ENCODE measurements at regions of chr19 and their contacts with region 1.

Region 1: DNA sequence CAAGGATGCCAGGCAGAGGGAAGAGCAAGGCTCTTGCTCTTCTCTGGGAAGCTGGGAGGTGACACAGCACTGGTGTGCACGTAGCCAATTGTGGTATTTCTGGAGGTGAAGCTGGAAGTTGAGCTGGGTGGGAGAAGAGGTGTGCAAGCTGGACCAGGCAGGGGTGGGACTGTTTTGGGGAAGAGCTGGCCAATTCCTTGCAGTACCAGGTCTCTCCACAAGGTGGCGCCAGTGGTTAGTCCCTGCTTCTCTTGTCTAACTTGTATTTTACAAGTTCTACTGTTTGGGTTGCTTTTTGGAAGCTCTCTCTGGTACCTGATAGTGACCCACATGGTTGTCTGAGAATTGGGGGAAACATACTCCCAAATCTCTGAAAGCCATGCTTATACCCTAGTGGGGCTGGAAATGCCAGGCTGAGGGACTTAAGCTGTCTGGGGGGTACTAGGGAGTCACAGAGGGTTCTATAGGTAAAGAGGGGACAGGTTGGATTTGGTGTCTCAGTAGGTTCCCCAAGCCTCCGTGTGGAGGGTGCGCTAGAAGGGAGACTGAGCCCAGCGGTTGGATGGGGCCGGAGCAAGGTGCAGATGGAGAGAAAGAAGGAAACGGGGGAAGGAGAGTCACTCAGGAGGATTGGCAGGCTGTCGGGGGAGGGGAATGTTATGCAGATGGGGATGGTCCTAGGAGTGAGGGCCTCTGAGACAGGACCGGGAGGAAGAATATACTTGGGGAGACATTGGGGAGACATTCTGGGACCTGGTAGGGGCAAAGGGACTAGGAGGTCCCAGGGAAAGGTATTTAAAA is 3.0 kb downstream of the HPN start:
- DNase-seq: peak; percentile 85
- H3K4me3 ChIP-seq: peak overlapping the region in 1 of 2 experiments; percentile 26; a peak in 1 of 4 replicates
- H3K27ac ChIP-seq: no peak overlapping the region
- H3K4me1 ChIP-seq: peaks cover 0 to 8% of the 10 kb centered on the region in 2 experiments; a peak in 1 of 4 replicates
- H3K27me3 ChIP-seq: no peaks in the 10 kb centered on the region
- CTCF ChIP-seq: peak; percentile 98
- EP300 ChIP-seq: no peak
- RAD21 ChIP-seq: peak; percentile 62

Region 2: DNA sequence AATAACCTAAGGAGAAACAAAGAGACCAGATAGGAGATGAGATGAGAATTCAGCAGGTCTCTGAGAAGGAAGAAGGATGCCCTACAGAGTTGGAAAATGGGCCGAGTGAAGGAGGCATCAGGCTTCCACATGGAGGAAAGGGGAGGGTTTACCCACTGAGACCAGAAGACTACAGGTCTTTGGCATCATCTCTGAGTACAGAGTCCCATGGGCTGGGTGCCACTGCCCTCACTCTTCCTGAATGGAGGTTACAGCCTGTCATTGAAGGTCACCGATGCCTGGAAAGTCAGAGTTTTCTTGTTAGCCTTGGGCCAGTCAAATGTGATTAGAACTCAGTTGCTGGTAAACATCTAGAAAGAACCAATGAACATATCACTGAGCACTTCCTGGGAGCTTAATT is 357.2 kb before region 1 on chr19:
- CTCF ChIA-PET with region 1: no interaction called
- POLR2A ChIA-PET with region 1: no interaction called
- DNase-seq: no peak
- H3K4me3 ChIP-seq: no peak overlapping the region
- H3K27ac ChIP-seq: no peak overlapping the region
- H3K4me1 ChIP-seq: no peaks in the 10 kb centered on the region
- H3K27me3 ChIP-seq: no peaks in the 10 kb centered on the region
- CTCF ChIP-seq: no peak
- EP300 ChIP-seq: no peak
- RAD21 ChIP-seq: no peak

Region 3: DNA sequence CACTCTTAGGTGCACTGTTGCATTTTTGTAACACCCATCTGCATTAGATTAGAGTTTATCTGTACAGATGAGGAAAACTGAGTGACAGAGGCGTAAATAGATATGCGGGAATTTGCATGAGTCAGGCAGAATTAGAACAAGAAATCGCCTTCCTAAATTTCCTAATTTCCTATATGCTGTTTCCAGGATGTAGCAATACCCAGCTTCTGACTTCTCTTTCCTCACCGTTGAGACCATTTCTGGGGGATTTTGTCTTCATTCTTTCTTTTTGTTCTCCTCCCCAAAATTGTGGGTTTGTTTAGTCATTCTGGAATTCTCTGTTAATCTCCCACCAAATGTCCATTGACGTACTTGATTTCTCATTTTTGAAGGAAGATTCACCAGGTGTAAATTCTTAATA is 69.9 kb before region 1 on chr19:
- CTCF ChIA-PET with region 1: interaction called, 14 read pairs
- POLR2A ChIA-PET with region 1: no interaction called
- DNase-seq: no peak
- H3K4me3 ChIP-seq: no peak overlapping the region
- H3K27ac ChIP-seq: no peak overlapping the region
- H3K4me1 ChIP-seq: no peaks in the 10 kb centered on the region
- H3K27me3 ChIP-seq: peaks cover 6% of the 10 kb centered on the region; the same call in 1 of the 2 replicates
- CTCF ChIP-seq: no peak
- EP300 ChIP-seq: no peak
- RAD21 ChIP-seq: no peak

Region 4: GRCh38 chr19:35022460-35022859 is 22.1 kb before region 1 on chr19:
- CTCF ChIA-PET with region 1: interaction called, 13 read pairs
- POLR2A ChIA-PET with region 1: no interaction called
- DNase-seq: no peak
- H3K4me3 ChIP-seq: no peak overlapping the region
- H3K27ac ChIP-seq: no peak overlapping the region
- H3K4me1 ChIP-seq: peaks cover 0 to 6% of the 10 kb centered on the region in 2 experiments; a peak in 1 of 4 replicates
- H3K27me3 ChIP-seq: no peaks in the 10 kb centered on the region
- CTCF ChIP-seq: no peak
- EP300 ChIP-seq: no peak
- RAD21 ChIP-seq: no peak

Region 5: GRCh38 chr19:35055715-35056179 is 11.2 kb after region 1 on chr19:
- CTCF ChIA-PET with region 1: interaction called, 86 read pairs
- POLR2A ChIA-PET with region 1: no interaction called
- DNase-seq: no peak
- H3K4me3 ChIP-seq: no peak overlapping the region
- H3K27ac ChIP-seq: no peak overlapping the region
- H3K4me1 ChIP-seq: no peaks in the 10 kb centered on the region
- H3K27me3 ChIP-seq: peaks cover 37% of the 10 kb centered on the region
- CTCF ChIP-seq: peak; percentile 24; the same call in 1 of the 2 replicates
- EP300 ChIP-seq: no peak
- RAD21 ChIP-seq: no peak

Region 6: DNA sequence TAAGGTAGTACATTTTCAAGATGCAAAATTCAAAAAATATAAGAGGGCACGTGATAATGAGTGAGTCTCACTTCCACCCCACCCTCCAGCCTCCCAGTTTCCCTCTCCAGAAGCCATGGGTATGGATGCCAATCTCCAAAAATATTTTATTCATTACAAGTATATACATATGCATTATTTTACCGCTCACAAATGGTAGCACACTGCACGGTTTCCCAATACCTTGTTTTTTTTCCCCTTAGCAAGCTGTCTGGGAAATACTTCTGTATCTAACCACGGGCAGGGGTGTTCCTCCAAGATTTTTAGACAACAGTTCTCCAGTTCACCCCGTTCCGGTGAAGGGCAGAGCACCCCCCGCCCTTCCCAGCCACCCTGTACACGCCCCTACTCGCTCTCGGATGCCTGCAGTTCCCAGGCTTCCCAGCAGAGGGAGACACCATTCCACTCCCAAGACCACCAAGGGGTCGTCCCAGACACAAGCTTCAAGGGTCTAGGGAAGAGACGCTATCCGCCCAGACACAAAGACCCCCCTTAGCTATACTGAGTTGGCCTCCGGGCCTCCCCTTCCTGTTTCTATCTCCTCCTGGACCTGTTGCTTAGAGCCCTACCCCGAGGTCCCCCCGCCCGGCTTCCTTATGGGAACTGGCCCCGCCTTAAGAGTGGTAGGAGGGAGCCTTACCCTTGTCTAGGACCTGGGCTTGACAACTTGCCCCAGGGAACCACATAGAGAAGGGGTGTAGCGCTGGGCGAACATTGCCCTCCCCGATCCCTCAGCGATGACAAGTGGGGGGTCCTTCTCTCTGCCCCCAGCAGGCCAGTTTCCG is 70.0 kb after region 1 on chr19:
- CTCF ChIA-PET with region 1: interaction called, 10 read pairs
- POLR2A ChIA-PET with region 1: no interaction called
- DNase-seq: peak; percentile 92
- H3K4me3 ChIP-seq: peak overlapping the region in 1 of 2 experiments; percentile 44; a peak in 1 of 4 replicates
- H3K27ac ChIP-seq: no peak overlapping the region
- H3K4me1 ChIP-seq: peaks cover 0 to 8% of the 10 kb centered on the region in 2 experiments; a peak in 1 of 4 replicates
- H3K27me3 ChIP-seq: no peaks in the 10 kb centered on the region; the same call in 1 of the 2 replicates
- CTCF ChIP-seq: peak; percentile 96
- EP300 ChIP-seq: no peak
- RAD21 ChIP-seq: peak; percentile 70

Region 7: DNA sequence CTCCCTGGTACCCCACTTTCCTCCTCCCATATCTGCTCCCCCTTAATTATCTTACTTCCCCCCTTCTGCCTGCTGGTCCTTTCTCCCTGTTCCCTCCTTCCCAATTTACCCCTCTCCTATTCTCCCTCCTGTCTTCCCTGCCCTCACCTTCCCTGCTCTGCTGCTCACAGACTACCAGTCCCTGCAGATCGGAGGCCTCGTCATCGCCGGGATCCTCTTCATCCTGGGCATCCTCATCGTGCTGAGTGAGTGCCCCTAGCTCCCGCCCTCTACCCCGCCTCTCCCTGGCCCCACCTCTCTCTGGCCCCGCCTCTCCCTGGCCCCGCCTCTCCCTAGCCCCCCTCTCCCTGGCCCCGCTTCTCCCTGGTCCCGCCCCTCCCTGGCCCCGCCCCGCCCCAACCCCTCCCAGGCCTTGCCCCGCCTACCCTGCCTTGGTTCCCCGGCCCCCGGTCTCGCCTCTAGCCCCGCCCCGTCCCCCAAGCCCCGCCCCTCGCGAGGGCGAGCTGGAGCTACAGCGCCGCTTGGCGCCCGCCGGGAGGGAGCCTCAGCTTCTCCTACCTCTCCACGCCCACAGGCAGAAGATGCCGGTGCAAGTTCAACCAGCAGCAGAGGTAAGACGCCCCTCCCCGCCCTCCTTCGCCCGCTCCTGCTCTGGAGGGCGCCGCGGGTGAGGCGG is 96.6 kb after region 1 on chr19:
- CTCF ChIA-PET with region 1: interaction called, 23 read pairs
- POLR2A ChIA-PET with region 1: no interaction called
- DNase-seq: peak; percentile 100
- H3K4me3 ChIP-seq: peak overlapping the region in 1 of 2 experiments; percentile 41; a peak in 2 of 4 replicates
- H3K27ac ChIP-seq: no peak overlapping the region
- H3K4me1 ChIP-seq: peaks cover 0 to 25% of the 10 kb centered on the region in 2 experiments; a peak in 2 of 4 replicates
- H3K27me3 ChIP-seq: peaks cover 41% of the 10 kb centered on the region; the same call in 1 of the 2 replicates
- CTCF ChIP-seq: peak; percentile 47
- EP300 ChIP-seq: no peak
- RAD21 ChIP-seq: peak; percentile 48

Measured in SK-N-SH (cell line).